ENCODE measurements at regions of chr14 and their contacts with region 1.

Region 1: GRCh38 chr14:50321009-50321660 is 9.0 kb downstream of the DMAC2L start:
- DNase-seq: peak; percentile 89
- H3K4me3 Mint-ChIP-seq: no peak overlapping the region
- H3K27ac Mint-ChIP-seq: no peak overlapping the region
- H3K4me1 Mint-ChIP-seq: no peaks in the 10 kb centered on the region
- H3K27me3 Mint-ChIP-seq: no peaks in the 10 kb centered on the region
- CTCF ChIP-seq: peak; percentile 61

Region 2: GRCh38 chr14:50037852-50038251 is 283.3 kb before region 1 on chr14:
- CTCF ChIA-PET with region 1: no interaction called
- POLR2A ChIA-PET with region 1: no interaction called
- intact Hi-C with region 1: no loop called
- DNase-seq: peak; percentile 10
- H3K4me3 Mint-ChIP-seq: no peak overlapping the region
- H3K27ac Mint-ChIP-seq: peak overlapping the region; percentile 89
- H3K4me1 Mint-ChIP-seq: peaks cover 43% of the 10 kb centered on the region
- H3K27me3 Mint-ChIP-seq: no peaks in the 10 kb centered on the region
- CTCF ChIP-seq: no peak

Region 3: GRCh38 chr14:50173891-50174290 is 147.2 kb before region 1 on chr14:
- CTCF ChIA-PET with region 1: no interaction called
- POLR2A ChIA-PET with region 1: no interaction called
- intact Hi-C with region 1: no loop called
- DNase-seq: no peak
- H3K4me3 Mint-ChIP-seq: no peak overlapping the region
- H3K27ac Mint-ChIP-seq: no peak overlapping the region
- H3K4me1 Mint-ChIP-seq: no peaks in the 10 kb centered on the region
- H3K27me3 Mint-ChIP-seq: no peaks in the 10 kb centered on the region
- CTCF ChIP-seq: no peak

Region 4: DNA sequence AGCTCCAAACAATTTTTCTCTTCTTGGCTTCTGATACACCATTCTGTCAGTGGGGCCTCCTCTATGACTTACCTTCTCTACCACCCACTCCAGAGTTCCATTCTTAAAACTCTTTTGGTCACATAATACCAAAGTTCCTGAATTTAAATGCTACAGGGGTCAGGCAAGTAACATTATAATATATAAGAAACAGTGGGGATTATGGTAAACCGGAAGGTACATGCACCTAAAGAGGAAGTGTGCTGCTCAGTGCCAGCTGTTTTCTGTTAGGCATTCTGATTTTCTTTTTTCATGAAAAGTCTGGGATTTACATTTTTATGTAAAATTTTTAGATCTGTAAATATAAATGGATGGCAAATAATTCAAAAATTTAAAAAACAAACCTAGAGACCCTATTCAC is 129.6 kb before region 1 on chr14:
- CTCF ChIA-PET with region 1: no interaction called
- POLR2A ChIA-PET with region 1: no interaction called
- intact Hi-C with region 1: no loop called
- DNase-seq: no peak
- H3K4me3 Mint-ChIP-seq: no peak overlapping the region
- H3K27ac Mint-ChIP-seq: no peak overlapping the region
- H3K4me1 Mint-ChIP-seq: no peaks in the 10 kb centered on the region
- H3K27me3 Mint-ChIP-seq: no peaks in the 10 kb centered on the region
- CTCF ChIP-seq: no peak

Region 5: DNA sequence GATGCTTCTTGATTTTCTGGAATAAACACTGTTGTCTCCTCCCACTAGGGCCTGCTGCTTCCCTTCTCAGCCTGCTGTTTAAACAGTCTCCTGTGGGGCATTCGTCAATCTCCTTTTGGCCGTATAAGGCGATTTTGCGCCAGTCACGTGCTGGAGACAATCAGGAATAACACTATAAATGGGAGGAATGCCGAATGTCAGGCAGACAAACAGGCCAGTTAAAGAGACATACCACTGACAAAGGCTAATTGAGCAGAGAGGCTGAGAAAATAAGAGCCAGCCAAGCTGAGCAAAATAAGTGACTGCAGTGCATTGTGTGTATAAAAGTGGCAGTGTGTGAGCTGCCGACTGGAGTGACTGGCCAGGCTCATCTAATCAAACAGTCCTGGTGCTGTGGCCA is 14.3 kb after region 1 on chr14:
- CTCF ChIA-PET with region 1: interaction called, 62 read pairs
- POLR2A ChIA-PET with region 1: interaction called, 17 read pairs
- intact Hi-C with region 1: no loop called
- DNase-seq: no peak
- H3K4me3 Mint-ChIP-seq: no peak overlapping the region
- H3K27ac Mint-ChIP-seq: no peak overlapping the region
- H3K4me1 Mint-ChIP-seq: peaks cover 8% of the 10 kb centered on the region
- H3K27me3 Mint-ChIP-seq: no peaks in the 10 kb centered on the region
- CTCF ChIP-seq: no peak

Region 6: GRCh38 chr14:50396631-50397390 is 75.7 kb after region 1 on chr14 and contains the start of gene CDKL1:
- CTCF ChIA-PET with region 1: interaction called, 9 read pairs
- POLR2A ChIA-PET with region 1: interaction called, 47 read pairs
- intact Hi-C with region 1: loop called (anchors 1 kb)
- DNase-seq: peak; percentile 76
- H3K4me3 Mint-ChIP-seq: peak within 1 kb of the TSS; percentile 86
- H3K27ac Mint-ChIP-seq: peak within 1 kb of the TSS; percentile 90
- H3K4me1 Mint-ChIP-seq: peaks cover 18% of the 10 kb centered on the region
- H3K27me3 Mint-ChIP-seq: no peaks in the 10 kb centered on the region
- CTCF ChIP-seq: no peak
- total RNA-seq, gene CDKL1: 14.3 and 26.3 TPM in 2 replicates

Region 7: DNA sequence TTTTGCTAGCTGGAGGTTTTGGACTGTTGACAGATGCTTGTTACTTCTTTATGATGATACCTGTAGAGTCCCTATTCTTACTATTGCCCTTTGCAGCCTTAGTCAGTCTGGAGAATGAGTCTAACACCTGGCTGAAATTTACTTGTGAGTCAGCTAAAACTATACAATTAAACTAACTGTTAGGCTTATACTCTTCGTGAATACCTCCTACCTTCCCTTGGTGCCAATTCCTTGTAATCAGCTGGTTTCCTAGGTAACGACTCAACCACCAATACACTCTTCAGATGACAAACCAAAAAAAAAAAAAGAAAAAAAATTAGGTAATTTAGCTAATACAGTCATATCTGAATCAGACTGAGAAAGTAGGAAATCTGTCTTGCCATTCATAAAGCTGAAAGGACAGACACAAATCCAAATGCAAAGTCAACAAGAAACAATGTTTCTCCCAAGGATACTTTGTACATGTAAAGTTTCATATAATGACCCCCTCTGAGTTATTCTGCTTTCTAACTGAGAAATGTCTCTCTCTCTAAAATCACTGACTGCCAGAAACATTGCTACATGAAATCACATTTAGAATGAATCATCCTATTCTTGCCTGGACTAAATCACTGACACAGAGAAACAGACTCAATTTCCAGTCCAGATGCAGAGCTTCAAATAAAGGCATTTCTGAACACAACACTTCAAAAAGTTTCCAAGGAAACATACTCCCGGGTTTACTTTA is 132.0 kb after region 1 on chr14:
- CTCF ChIA-PET with region 1: no interaction called
- POLR2A ChIA-PET with region 1: interaction called, 6 read pairs
- intact Hi-C with region 1: loop called (anchors 1 kb)
- DNase-seq: peak; percentile 61
- H3K4me3 Mint-ChIP-seq: no peak overlapping the region
- H3K27ac Mint-ChIP-seq: peak overlapping the region; percentile 71
- H3K4me1 Mint-ChIP-seq: peaks cover 16% of the 10 kb centered on the region
- H3K27me3 Mint-ChIP-seq: no peaks in the 10 kb centered on the region
- CTCF ChIP-seq: no peak

Region 8: DNA sequence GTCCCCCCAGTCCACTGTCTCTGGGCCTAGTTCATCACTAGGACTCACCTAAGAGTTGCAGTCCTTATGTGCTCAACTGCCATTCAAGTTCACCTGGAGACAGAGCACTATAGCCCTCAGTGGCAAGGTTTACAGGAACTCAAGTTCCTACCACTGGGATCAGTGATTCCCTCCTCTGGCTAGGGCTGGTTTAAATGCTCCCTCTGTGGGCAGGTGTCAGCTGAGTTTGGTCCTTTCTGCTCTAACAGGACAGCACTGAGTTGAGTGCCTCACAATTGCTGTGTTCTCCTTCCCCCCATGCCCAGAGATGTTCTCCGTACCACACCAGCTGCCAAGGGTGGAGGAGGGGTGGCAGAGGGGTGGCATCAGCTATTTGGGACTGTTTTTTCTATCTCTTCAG is 367.7 kb after region 1 on chr14:
- CTCF ChIA-PET with region 1: no interaction called
- POLR2A ChIA-PET with region 1: no interaction called
- intact Hi-C with region 1: no loop called
- DNase-seq: no peak
- H3K4me3 Mint-ChIP-seq: no peak overlapping the region
- H3K27ac Mint-ChIP-seq: no peak overlapping the region
- H3K4me1 Mint-ChIP-seq: no peaks in the 10 kb centered on the region
- H3K27me3 Mint-ChIP-seq: no peaks in the 10 kb centered on the region
- CTCF ChIP-seq: no peak

Region 9: GRCh38 chr14:50778721-50779483 is 457.8 kb after region 1 on chr14:
- CTCF ChIA-PET with region 1: interaction called, 22 read pairs
- POLR2A ChIA-PET with region 1: interaction called, 5 read pairs
- intact Hi-C with region 1: loop called (anchors 2 kb)
- DNase-seq: no peak
- H3K4me3 Mint-ChIP-seq: no peak overlapping the region
- H3K27ac Mint-ChIP-seq: peak overlapping the region; percentile 22
- H3K4me1 Mint-ChIP-seq: peaks cover 29% of the 10 kb centered on the region
- H3K27me3 Mint-ChIP-seq: no peaks in the 10 kb centered on the region
- CTCF ChIP-seq: no peak